B cell (primary cell): ENCODE measurements at regions of chr5 and their contacts with region 1.

Region 1: GRCh38 chr5:14664302-14665100 is at the start of gene OTULIN:
- DNase-seq: peak; percentile 94
- ATAC-seq: peak; percentile 81
- H3K4me3 ChIP-seq: peak within 1 kb of the TSS; percentile 75 to 91 (median 79)
- H3K4me3 Mint-ChIP-seq: peak within 1 kb of the TSS; percentile 99
- H3K27ac ChIP-seq: peak within 1 kb of the TSS; percentile 67 to 89
- H3K27ac Mint-ChIP-seq: peak within 1 kb of the TSS; percentile 99
- H3K4me1 ChIP-seq: peaks cover 48 to 60% of the 10 kb centered on the region in 2 donors
- H3K4me1 Mint-ChIP-seq: peaks cover 69% of the 10 kb centered on the region
- H3K27me3 ChIP-seq: no peaks in the 10 kb centered on the region
- H3K27me3 Mint-ChIP-seq: no peaks in the 10 kb centered on the region
- CTCF ChIP-seq: no peak
- total RNA-seq, gene OTULIN: 60.6 and 64.4 TPM in 2 replicates

Region 2: DNA sequence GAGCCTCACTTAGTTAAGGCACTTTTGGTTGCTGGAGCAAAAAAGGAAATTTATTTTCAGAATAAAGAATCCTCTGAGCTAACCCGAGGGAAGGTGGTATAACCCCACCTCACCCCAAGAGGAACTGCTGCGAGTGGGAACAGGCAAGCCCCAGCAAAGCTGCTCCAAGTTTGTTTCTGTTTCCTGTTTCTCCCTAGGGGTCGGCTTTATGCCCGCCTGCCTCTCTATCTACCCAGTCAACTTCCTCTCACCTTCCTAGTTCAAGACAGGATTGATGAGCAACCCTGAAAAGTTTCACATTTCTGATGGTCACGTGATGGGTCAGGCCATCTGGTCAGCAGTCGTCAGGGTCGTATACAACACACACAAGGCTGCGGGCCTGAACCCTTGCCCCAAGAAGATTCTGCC is 490.3 kb before region 1 on chr5:
- CTCF ChIA-PET with region 1: no interaction called
- POLR2A ChIA-PET with region 1: no interaction called
- intact Hi-C with region 1: loop called (anchors 10 kb)
- DNase-seq: peak; percentile 62
- ATAC-seq: peak; percentile 59
- H3K4me3 ChIP-seq: peak overlapping the region in 4 of 5 experiments; percentile 10 to 58 (median 33)
- H3K4me3 Mint-ChIP-seq: peak overlapping the region; percentile 75
- H3K27ac ChIP-seq: peak overlapping the region; percentile 34 to 65
- H3K27ac Mint-ChIP-seq: peak overlapping the region; percentile 82
- H3K4me1 ChIP-seq: peaks cover 54 to 56% of the 10 kb centered on the region in 2 donors
- H3K4me1 Mint-ChIP-seq: peaks cover 72% of the 10 kb centered on the region
- H3K27me3 ChIP-seq: no peaks in the 10 kb centered on the region
- H3K27me3 Mint-ChIP-seq: no peaks in the 10 kb centered on the region
- CTCF ChIP-seq: no peak

Region 3: DNA sequence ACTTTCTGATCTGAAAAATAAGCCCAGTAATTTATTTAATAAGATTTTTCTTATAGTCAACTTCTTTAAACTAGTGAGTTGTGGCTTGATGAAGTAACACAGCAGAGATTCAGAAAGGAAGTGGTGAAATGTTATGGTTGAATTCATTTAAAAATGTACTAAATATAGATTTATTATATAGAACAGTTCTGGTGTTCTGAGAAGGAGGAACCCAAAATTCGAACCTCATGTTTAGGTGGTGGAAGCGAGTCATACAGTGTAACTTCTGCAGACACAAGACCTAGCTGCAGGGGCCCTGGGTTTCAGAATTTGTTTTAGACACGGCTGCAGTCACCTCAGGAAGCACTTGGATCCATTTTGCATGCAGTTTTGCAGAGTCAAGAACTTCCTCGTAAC is 333.1 kb before region 1 on chr5:
- CTCF ChIA-PET with region 1: no interaction called
- POLR2A ChIA-PET with region 1: no interaction called
- intact Hi-C with region 1: loop called (anchors 5 kb)
- DNase-seq: peak; percentile 60
- ATAC-seq: peak; percentile 93
- H3K4me3 ChIP-seq: peak overlapping the region in 1 of 5 experiments; percentile 19
- H3K4me3 Mint-ChIP-seq: peak overlapping the region; percentile 73
- H3K27ac ChIP-seq: peak overlapping the region; percentile 50 to 55
- H3K27ac Mint-ChIP-seq: peak overlapping the region; percentile 66
- H3K4me1 ChIP-seq: peaks cover 49% of the 10 kb centered on the region in 2 donors
- H3K4me1 Mint-ChIP-seq: peaks cover 62% of the 10 kb centered on the region
- H3K27me3 ChIP-seq: no peaks in the 10 kb centered on the region
- H3K27me3 Mint-ChIP-seq: no peaks in the 10 kb centered on the region
- CTCF ChIP-seq: no peak

Region 4: DNA sequence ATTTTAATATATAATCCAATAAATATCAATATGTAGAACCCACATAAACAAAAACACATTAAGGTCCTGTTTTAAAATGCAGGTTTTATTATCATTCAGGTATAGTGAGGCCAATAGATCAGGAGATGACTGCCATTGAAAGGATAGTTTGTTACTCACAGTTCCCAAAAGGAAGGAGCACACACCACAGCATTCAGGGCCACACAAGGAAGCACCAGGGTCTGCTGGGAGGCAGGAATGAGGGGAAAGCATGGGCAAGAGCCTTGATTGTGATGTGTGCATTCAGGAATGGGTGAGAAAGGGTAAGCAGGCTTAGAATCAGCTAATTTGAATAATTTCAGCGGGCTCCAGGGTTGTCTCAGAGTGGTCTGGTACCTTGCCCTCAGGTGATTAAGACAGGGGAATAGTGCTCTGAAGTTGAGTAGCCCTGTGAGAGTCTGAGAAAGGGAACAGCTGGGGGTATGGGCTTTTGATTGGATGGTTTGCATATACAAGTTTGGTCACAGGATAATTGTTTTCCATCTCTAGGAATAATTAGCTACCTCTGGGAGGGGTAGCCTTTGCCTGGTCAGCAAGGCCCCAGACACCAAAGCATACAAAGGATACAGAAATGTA is 19.8 kb before region 1 on chr5:
- CTCF ChIA-PET with region 1: interaction called, 37 read pairs
- POLR2A ChIA-PET with region 1: no interaction called
- intact Hi-C with region 1: no loop called
- DNase-seq: no peak
- ATAC-seq: no peak
- H3K4me3 ChIP-seq: no peak overlapping the region
- H3K4me3 Mint-ChIP-seq: no peak overlapping the region
- H3K27ac ChIP-seq: no peak overlapping the region
- H3K27ac Mint-ChIP-seq: no peak overlapping the region
- H3K4me1 ChIP-seq: no peaks in the 10 kb centered on the region
- H3K4me1 Mint-ChIP-seq: no peaks in the 10 kb centered on the region
- H3K27me3 ChIP-seq: peaks cover 0 to 5% (median 0%) of the 10 kb centered on the region in 4 experiments
- H3K27me3 Mint-ChIP-seq: peaks cover 38% of the 10 kb centered on the region
- CTCF ChIP-seq: no peak

Region 5: GRCh38 chr5:14685757-14686156 is 21.3 kb after region 1 on chr5:
- CTCF ChIA-PET with region 1: interaction called, 8 read pairs
- POLR2A ChIA-PET with region 1: interaction called, 3 read pairs
- intact Hi-C with region 1: loop called (anchors 2 kb)
- DNase-seq: peak; percentile 70
- ATAC-seq: peak; percentile 79
- H3K4me3 ChIP-seq: no peak overlapping the region
- H3K4me3 Mint-ChIP-seq: peak overlapping the region; percentile 8
- H3K27ac ChIP-seq: no peak overlapping the region
- H3K27ac Mint-ChIP-seq: no peak overlapping the region
- H3K4me1 ChIP-seq: peaks cover 5 to 10% of the 10 kb centered on the region in 2 donors
- H3K4me1 Mint-ChIP-seq: peaks cover 9% of the 10 kb centered on the region
- H3K27me3 ChIP-seq: no peaks in the 10 kb centered on the region
- H3K27me3 Mint-ChIP-seq: no peaks in the 10 kb centered on the region
- CTCF ChIP-seq: peak; percentile 74

Region 6: DNA sequence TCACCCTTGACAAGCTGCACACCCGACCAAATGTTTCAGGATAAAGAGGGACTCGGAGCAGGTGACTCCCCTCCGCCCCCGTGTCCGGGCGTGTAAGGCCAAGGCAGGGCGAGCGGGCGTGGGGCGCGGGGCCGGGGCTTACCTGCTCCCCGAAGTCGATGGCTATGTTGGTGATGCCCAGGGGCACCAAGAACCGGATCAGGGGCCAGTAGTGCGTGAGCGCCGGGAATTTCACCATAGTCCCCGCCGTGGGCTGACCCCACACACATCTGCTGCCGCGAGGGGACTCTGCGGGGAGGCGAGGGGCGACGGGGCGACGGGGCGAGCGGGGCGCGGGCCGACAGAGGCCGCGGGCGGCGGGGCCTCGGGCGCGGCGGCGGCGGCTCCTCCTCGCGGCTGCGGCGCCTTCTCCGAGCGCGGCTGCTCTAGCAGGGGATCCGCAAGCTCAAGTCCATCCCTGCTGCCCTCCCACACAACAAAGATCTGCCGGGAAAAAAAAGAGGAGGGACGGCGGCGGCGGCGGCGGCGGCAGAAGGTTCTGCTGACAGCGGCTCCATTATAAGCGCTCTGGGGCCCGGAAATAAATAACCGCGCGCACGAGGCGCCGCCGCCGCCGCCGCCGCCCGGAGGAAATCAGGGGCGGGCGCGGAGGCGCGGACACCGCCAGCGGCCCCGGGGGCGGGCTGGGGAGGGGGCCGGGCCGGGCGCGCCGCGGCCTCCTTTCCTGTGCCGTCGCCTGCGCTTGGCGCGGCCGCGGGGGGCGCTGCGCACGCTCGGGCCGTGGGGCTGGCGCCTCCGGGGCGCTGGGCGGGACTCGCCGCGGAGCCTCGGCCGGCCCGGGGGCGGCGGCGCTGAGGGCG is 206.9 kb after region 1 on chr5 and contains the start of gene ANKH:
- CTCF ChIA-PET with region 1: interaction called, 3 read pairs
- POLR2A ChIA-PET with region 1: no interaction called
- intact Hi-C with region 1: loop called (anchors 1 kb)
- DNase-seq: peak; percentile 90
- ATAC-seq: peak; percentile 87
- H3K4me3 ChIP-seq: peak within 1 kb of the TSS; percentile 7 to 86 (median 64)
- H3K4me3 Mint-ChIP-seq: peak within 1 kb of the TSS; percentile 94
- H3K27ac ChIP-seq: peak within 1 kb of the TSS; percentile 24 to 74
- H3K27ac Mint-ChIP-seq: peak within 1 kb of the TSS; percentile 88
- H3K4me1 ChIP-seq: peaks cover 13 to 22% of the 10 kb centered on the region in 2 donors
- H3K4me1 Mint-ChIP-seq: peaks cover 25% of the 10 kb centered on the region
- H3K27me3 ChIP-seq: peaks cover 0 to 3% (median 0%) of the 10 kb centered on the region in 4 experiments
- H3K27me3 Mint-ChIP-seq: peaks cover 9% of the 10 kb centered on the region
- CTCF ChIP-seq: no peak
- total RNA-seq, gene ANKH: 71.1 and 71.3 TPM in 2 replicates

Region 7: DNA sequence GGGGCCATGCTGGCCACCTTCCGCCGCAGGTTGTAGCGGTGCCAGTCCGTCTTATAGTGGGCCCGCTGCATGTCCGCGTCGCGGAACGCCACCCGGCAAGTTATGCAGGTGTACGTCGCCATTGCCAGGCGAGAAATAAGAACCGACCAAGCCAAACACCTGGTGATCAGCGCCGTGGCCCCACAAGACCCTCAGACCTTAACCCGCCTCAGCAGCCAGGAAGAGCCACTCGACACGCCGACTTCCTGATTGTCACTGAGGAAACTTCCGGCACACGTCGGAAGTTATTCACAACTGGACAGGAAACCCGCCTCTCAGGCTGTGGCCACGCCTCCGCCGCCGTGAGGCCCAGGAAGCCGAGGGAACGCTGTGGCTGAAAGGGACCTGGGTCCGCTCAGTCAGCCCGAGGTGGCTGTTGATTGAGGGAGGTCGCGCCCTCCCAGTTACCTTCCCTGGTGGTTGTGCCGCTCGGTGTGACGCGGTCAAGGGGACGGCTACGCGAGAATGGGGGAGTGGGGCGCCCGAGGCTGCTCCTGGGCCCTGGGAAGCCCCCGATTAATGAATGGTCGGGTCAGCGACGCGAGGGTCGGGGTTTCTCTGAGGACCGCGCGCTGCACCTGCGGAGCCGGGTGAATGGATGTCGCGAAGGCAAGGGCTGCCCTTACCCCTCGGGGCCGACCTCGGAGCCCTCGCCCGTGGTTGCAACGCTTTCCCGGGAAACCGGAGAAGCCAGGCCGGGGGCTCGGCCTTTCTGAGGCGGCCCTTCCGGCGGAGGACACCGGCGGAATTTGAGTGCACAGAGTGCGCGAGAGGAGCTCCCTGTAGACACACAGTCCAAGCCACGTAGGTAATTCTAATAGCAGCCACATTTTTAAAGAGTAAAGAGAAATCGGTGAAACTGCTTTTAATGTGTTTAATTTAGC is 1801.3 kb after region 1 on chr5 and contains the start of gene ZNF622:
- CTCF ChIA-PET with region 1: no interaction called
- POLR2A ChIA-PET with region 1: no interaction called
- intact Hi-C with region 1: loop called (anchors 10 kb)
- DNase-seq: peak; percentile 92
- ATAC-seq: peak; percentile 96
- H3K4me3 ChIP-seq: peak within 1 kb of the TSS; percentile 90 to 98 (median 96)
- H3K4me3 Mint-ChIP-seq: peak within 1 kb of the TSS; percentile 96
- H3K27ac ChIP-seq: peak within 1 kb of the TSS; percentile 79 to 90
- H3K27ac Mint-ChIP-seq: peak within 1 kb of the TSS; percentile 94
- H3K4me1 ChIP-seq: peaks cover 41 to 43% of the 10 kb centered on the region in 2 donors
- H3K4me1 Mint-ChIP-seq: peaks cover 78% of the 10 kb centered on the region
- H3K27me3 ChIP-seq: no peaks in the 10 kb centered on the region
- H3K27me3 Mint-ChIP-seq: no peaks in the 10 kb centered on the region
- CTCF ChIP-seq: no peak
- total RNA-seq, gene ZNF622: 34.6 and 37.1 TPM in 2 replicates